Esophagus squamous epithelium (tissue), 5 donors: ENCODE measurements at regions of chr10 and their contacts with region 1.

Region 1: GRCh38 chr10:72248468-72249151 is 25.1 kb upstream of the DDIT4 start:
- DNase-seq: peak; percentile 88
- H3K4me3 ChIP-seq: peak overlapping the region in 3 of 4 donors; percentile 16 to 32 (median 25)
- H3K27ac ChIP-seq: peak overlapping the region; percentile 83 to 96 (median 93)
- H3K4me1 ChIP-seq: peaks cover 70 to 100% (median 88%) of the 10 kb centered on the region in 3 donors
- H3K27me3 ChIP-seq: no peaks in the 10 kb centered on the region
- CTCF ChIP-seq: peak in 1 of 6 experiments; percentile 11
- POLR2A ChIP-seq: peak in 3 of 4 donors; percentile 39 to 55 (median 55)

Region 2: DNA sequence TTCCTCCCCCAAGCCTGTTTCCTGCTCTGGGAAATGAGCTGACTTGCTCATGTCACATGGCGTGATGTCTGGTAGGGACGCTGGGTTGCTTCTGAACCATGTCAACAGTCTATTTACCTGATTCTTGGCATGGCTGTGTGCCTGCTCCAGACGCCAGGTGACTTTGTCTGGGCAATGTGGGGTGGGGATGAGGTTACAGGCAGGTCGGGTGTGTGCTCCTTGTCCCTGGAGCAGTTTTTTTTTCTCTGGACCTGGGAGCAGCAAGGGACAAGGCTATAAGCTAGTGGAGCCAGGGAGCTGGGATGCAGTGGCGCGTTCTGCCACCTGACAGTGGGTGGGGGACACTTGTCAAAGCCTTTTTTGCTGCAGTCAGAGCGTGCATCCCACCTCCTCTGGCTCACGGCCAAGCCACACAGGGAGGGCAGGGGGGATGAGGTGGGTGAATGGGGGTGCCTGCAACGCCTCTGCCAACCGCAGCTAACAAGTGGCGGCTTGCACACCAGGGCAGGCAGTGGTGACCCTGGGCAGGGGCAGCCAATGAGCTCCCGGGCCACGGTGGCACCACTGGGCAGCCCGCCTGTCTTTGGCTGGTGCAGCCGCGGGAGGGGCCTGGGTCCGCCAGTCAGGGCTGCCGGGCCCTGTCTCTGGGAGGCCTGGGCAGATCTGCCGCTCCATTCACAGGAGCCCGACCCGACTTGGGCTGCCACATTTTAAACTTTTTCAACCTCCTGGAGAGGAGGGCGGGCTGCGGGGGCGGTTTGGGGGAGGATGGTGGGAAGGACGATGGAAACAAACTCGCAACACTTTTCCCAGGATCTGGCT is 83.2 kb after region 1 on chr10:
- intact Hi-C with region 1: loop called (anchors 10 kb)
- DNase-seq: peak; percentile 56
- H3K4me3 ChIP-seq: peak overlapping the region in 2 of 4 donors; percentile 3 to 34
- H3K27ac ChIP-seq: peak overlapping the region; percentile 86 to 94 (median 93)
- H3K4me1 ChIP-seq: peaks cover 80 to 98% (median 84%) of the 10 kb centered on the region in 3 donors
- H3K27me3 ChIP-seq: no peaks in the 10 kb centered on the region
- CTCF ChIP-seq: peak in 4 of 6 experiments; percentile 50 to 74 (median 71)
- POLR2A ChIP-seq: peak in 2 of 4 donors; percentile 21 to 62